Breast epithelium (tissue), 4 donors: ENCODE measurements at regions of chr16 and their contacts with region 1.

Region 1: GRCh38 chr16:66872559-66872942 is 7.8 kb upstream of the PDP2 start:
- DNase-seq: no peak
- H3K4me3 ChIP-seq: peak overlapping the region in 2 of 3 donors; percentile 46 to 56
- H3K27ac ChIP-seq: peak overlapping the region; percentile 46 to 79
- H3K4me1 ChIP-seq: no peaks in the 10 kb centered on the region
- H3K27me3 ChIP-seq: no peaks in the 10 kb centered on the region
- CTCF ChIP-seq: no peak
- POLR2A ChIP-seq: no peak

Region 2: DNA sequence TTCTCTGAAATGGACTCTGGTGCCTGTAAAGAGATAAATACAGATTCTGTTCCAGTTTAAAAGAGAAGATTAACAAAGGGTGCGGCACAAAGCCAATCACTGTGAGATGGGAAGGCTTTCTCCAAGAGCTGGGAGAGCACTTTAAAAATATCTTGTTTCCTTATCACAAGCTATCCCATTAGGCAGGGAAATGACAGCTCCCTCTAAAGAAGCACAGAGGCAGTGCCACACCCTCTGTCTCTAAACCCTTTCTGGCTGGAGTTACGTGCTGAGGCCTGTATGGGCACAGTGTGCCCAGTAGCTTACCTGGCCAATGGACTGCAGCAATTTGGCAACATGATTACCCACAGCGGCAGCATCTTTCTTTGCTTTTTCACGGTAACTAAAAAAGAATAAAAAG is 62.2 kb before region 1 on chr16:
- intact Hi-C with region 1: loop called (anchors 2 kb)
- DNase-seq: no peak
- H3K4me3 ChIP-seq: no peak overlapping the region
- H3K27ac ChIP-seq: no peak overlapping the region
- H3K4me1 ChIP-seq: no peaks in the 10 kb centered on the region
- H3K27me3 ChIP-seq: no peaks in the 10 kb centered on the region
- CTCF ChIP-seq: no peak
- POLR2A ChIP-seq: no peak